ENCODE measurements at regions of chr16 and their contacts with region 1.

Region 1: GRCh38 chr16:2520092-2520783 is at the start of gene AMDHD2:
- DNase-seq: peak; percentile 93
- ATAC-seq: peak; percentile 69
- H3K4me3 Mint-ChIP-seq: peak within 1 kb of the TSS; percentile 87
- H3K27ac Mint-ChIP-seq: peak within 1 kb of the TSS; percentile 95
- H3K4me1 Mint-ChIP-seq: peaks cover 50% of the 10 kb centered on the region
- H3K27me3 Mint-ChIP-seq: no peaks in the 10 kb centered on the region
- total RNA-seq, gene AMDHD2: 54.0 to 58.5 TPM

Region 2: DNA sequence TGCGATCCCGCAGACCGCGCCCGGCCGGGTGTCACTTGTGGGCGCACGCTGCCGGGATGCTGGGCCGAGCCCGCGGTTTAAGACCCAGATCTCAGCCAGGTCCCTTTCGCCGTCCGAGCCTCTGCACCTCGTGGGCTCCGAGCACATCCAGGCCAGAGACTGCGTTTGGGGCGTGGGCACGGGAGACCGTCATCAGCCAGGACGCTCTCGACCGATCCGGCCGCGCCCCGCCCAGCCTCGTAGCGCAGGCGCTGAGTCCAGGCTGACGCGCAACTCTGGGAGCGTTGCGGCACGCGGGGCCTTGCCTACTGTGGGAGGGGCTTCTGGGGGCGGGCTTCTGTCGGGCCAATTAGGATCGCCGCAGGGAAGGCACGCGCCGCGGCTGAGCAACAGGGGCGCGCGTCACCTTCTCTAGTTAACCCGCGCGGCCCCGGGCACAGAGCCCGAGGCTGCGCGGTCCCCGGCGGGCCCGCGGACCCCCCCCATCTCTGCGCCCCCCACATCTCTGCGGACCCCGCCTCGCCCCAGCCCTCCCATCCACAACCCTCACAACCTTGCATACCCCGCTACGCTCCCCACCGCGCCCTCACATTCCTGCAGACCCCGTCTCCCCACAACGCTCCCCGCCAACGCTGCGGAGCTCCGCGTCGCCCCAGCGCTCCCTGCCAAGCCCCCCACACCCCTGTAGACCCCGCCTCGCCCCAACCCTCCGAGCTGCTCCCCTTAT is 11.7 kb after region 1 on chr16:
- CTCF ChIA-PET with region 1: interaction called, 4 read pairs
- POLR2A ChIA-PET with region 1: interaction called, 48 read pairs
- DNase-seq: peak; percentile 99
- ATAC-seq: peak; percentile 93
- H3K4me3 Mint-ChIP-seq: peak overlapping the region; percentile 95
- H3K27ac Mint-ChIP-seq: peak overlapping the region; percentile 100
- H3K4me1 Mint-ChIP-seq: peaks cover 32% of the 10 kb centered on the region
- H3K27me3 Mint-ChIP-seq: no peaks in the 10 kb centered on the region

Region 3: GRCh38 chr16:2537453-2538379 is 17.5 kb after region 1 on chr16 and contains the start of gene PDPK1:
- CTCF ChIA-PET with region 1: interaction called, 4 read pairs
- POLR2A ChIA-PET with region 1: interaction called, 48 read pairs
- DNase-seq: peak; percentile 94
- ATAC-seq: peak; percentile 94
- H3K4me3 Mint-ChIP-seq: peak within 1 kb of the TSS; percentile 88
- H3K27ac Mint-ChIP-seq: peak within 1 kb of the TSS; percentile 95
- H3K4me1 Mint-ChIP-seq: peaks cover 52% of the 10 kb centered on the region
- H3K27me3 Mint-ChIP-seq: no peaks in the 10 kb centered on the region
- total RNA-seq, gene PDPK1: 41.2 to 49.6 TPM